ENCODE measurements at regions of chr7 and their contacts with region 1.

Region 1: DNA sequence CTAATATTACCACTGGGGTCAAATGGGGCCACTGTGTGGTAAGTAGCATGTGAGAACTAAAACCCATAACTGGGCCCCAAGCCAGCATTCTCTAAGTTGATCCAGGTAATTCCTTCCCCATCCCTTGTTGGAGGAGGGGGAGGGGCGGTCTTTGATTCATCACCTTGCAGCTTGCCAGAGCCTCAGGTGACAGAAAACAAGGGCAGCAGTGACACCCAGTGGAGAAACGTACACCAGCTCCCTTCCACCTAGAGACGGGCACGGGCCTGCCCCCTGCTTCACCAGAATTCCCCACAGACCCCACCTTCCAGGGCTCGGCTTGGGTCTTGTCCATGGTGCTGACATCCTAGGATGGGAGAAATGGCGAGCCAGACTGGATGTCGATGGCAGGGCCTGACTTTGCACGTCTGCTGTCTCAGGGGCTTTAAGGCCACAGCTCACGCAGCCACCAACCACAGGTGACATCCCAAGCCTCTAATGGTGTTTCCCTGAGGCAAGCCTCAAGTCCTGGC is 102.0 kb downstream of the STRA8 start:
- DNase-seq: peak; percentile 51
- H3K4me3 Mint-ChIP-seq: no peak overlapping the region
- H3K27ac Mint-ChIP-seq: no peak overlapping the region
- H3K4me1 Mint-ChIP-seq: no peaks in the 10 kb centered on the region
- H3K27me3 Mint-ChIP-seq: no peaks in the 10 kb centered on the region

Region 2: DNA sequence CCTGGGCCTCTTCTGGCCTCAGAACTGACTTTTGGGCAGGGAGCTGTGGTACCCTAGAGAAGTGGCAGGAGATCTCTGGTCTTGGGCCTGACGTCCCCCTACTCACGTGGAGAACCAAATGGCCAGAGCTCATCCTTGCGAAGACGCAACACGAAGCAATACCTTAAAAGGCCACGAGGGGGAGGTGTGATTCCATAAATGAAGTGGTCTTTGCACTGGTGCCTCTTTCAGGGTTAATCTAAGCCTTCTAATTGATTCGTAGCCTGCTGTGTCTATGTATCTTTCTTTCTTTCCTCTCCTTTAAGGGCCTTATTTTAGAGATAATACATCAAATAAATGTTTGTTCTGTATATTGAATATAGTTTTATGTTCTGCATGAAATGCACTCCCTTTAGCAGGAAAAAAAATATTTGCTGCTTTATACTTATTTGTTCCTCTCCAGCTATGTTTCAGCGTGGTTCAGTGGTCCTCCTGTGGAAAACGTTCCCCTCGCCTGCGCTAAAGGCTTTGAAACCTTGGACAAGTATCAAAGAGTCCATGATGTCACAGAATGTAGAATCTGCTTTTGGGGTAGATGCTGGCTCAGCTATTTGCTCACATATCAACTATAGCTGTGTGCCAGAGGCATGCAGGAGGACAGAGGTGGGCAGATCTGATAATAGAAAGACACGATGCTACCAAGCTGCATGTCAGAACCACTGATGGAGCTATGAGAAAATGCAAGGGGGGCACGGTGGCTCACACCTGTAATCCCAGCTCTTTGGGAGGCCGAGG is 61.0 kb before region 1 on chr7:
- CTCF ChIA-PET with region 1: interaction called, 21 read pairs
- DNase-seq: peak; percentile 81
- H3K4me3 Mint-ChIP-seq: no peak overlapping the region
- H3K27ac Mint-ChIP-seq: no peak overlapping the region
- H3K4me1 Mint-ChIP-seq: peaks cover 2% of the 10 kb centered on the region
- H3K27me3 Mint-ChIP-seq: peaks cover 18% of the 10 kb centered on the region

Region 3: DNA sequence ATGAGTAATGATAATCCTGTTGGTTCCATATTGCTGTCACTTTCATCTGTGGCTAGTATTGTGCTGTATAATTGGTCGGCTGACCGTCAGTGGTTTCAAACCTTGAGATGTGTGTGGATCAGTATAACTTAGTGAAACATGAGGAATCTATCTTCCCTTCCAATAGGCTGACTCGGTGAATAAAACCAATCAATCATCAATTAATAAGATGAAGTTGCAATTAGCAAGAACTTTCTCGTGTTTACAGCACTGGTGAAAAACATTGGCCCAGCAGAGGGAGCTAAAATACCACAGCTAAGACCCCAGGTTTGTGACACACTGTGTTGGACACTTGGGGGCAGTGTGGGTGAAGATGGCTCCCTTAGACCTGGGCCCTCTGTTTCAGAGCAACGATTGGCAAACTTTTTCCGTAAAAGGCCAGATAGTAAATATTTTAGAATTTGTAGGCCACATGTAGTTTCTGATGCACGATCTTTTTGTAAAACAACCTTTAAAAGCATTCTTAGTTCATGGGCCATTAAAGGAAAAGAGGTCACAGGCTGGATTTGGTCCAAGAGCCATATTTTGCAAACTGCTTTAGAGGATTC is 54.2 kb before region 1 on chr7:
- CTCF ChIA-PET with region 1: interaction called, 21 read pairs
- DNase-seq: peak; percentile 88
- H3K4me3 Mint-ChIP-seq: no peak overlapping the region
- H3K27ac Mint-ChIP-seq: no peak overlapping the region
- H3K4me1 Mint-ChIP-seq: peaks cover 18% of the 10 kb centered on the region
- H3K27me3 Mint-ChIP-seq: peaks cover 5% of the 10 kb centered on the region

Measured in activated naive CD4-positive, alpha-beta T cell treated with anti-CD3 and anti-CD28 coated beads, Interleukin-2, amount 10 ng/mL, durations not matched to agents 7 days and 5 days (primary cell).